H1 (cell line): ENCODE measurements at regions of chr1 and their contacts with region 1.

Region 1: DNA sequence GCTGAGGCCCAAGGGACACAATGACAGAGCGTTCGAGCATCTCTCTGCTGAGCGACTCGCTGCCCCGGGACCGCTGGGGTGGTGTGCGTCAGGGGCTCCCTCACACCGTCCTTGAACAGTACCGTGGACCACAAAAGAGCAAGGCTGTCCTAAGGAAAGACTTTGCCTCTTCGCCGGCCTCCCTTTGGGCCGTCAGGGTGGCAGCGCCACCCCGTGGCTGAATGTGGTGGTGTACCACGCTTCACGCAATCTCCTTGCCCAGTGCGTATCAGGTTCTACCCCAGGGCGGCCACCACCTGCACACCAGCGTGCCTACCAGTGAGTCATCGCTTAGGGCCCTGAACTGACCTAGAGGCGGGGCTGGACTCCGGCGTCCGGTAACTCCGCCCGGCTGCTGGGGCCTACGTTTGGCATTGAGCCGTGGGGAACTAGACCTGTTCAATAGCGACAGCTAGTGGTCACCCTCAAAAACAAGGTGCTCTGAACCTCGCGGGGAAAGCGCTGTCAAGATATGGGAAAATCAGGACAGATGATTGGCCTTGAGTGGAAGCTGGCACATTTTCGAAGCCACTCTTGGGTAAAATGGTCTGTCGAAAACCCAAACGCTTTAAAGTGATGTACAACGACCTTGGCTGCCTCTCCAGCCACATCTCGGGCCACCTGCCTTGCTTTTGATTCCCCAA is 8.1 kb upstream of the TRAF3IP3 start:
- DNase-seq: peak; percentile 99
- H3K4me3 ChIP-seq: peak overlapping the region in 1 of 4 experiments; percentile 51; a peak in 4 of 8 replicates
- H3K27ac ChIP-seq: no peak overlapping the region
- H3K4me1 ChIP-seq: peaks cover 0 to 11% (median 0%) of the 10 kb centered on the region in 4 experiments; a peak in 1 of 7 replicates
- H3K27me3 ChIP-seq: peaks cover 0 to 4% (median 0%) of the 10 kb centered on the region in 4 experiments; a peak in 1 of 7 replicates
- CTCF ChIP-seq: peak; percentile 70 to 97 (median 94)
- EP300 ChIP-seq: peak in 1 of 2 experiments; percentile 76; a peak in 1 of 3 replicates
- POLR2A ChIP-seq: no peak
- RAD21 ChIP-seq: peak; percentile 70 to 75

Region 2: GRCh38 chr1:209733409-209734192 is 14.1 kb before region 1 on chr1:
- CTCF ChIA-PET with region 1: interaction called, 12 read pairs
- POLR2A ChIA-PET with region 1: no interaction called
- DNase-seq: no peak
- H3K4me3 ChIP-seq: no peak overlapping the region
- H3K27ac ChIP-seq: no peak overlapping the region
- H3K4me1 ChIP-seq: no peaks in the 10 kb centered on the region
- H3K27me3 ChIP-seq: no peaks in the 10 kb centered on the region
- CTCF ChIP-seq: no peak
- EP300 ChIP-seq: no peak
- POLR2A ChIP-seq: no peak
- RAD21 ChIP-seq: no peak

Region 3: DNA sequence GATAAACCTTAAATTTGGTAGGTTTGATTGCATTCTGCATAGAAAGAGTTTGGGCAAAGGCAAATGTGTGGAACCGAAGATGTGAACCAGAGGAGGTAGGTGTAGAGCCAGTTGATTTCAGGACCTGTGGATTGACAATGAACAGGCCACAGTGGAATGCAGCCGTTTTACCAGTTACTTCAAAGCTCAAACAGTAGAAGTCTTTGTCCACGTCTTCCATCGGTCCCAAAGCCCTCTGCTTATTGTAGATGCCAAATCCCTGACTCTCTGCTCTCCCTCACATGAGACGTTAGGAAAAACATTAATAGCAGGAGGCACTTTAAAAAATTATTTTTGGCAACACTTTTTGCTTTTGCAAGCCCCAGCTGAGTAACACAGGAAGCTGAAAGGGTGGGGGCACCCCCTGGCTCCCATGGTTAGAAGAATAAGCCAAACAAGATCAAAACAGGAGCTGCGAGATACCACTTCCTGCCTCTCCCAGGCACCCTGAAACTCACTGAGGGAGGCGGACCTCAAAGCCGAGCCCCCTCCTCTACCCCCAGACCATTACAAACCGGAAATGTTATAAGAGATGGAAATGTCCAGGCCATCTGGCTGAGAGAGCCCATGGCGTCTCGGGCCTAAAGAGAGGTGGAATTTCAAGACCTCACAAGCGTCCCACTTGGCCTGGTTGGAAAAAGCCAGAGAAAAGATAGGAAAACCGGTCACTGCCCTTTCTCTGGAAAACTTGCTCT is 21.6 kb after region 1 on chr1:
- CTCF ChIA-PET with region 1: interaction called, 14 read pairs
- POLR2A ChIA-PET with region 1: no interaction called
- DNase-seq: no peak
- H3K4me3 ChIP-seq: no peak overlapping the region
- H3K27ac ChIP-seq: no peak overlapping the region
- H3K4me1 ChIP-seq: no peaks in the 10 kb centered on the region; a peak in 1 of 7 replicates
- H3K27me3 ChIP-seq: peaks cover 0 to 2% (median 0%) of the 10 kb centered on the region in 4 experiments; a peak in 1 of 7 replicates
- CTCF ChIP-seq: no peak
- EP300 ChIP-seq: no peak
- POLR2A ChIP-seq: no peak
- RAD21 ChIP-seq: no peak

Region 4: DNA sequence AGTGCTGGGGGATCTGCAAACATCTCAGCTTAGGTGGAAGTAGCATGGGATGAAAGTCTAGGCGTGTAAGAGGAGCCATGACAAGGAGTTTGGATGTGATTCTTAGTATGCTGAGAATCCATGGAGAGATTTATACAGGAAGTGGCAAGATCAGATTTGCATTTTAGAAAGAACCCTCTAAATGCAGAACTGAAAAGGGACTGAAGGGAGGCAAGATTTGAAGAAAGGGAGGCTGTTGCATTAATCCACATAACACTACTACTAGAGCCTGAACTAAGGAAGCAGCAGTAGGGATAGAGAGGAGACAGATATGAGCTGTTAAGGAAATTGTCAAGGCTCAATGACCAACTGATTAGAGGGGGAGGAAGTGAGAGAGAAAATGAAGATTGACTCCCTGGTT is 26.9 kb after region 1 on chr1:
- CTCF ChIA-PET with region 1: interaction called, 13 read pairs
- POLR2A ChIA-PET with region 1: no interaction called
- DNase-seq: no peak
- H3K4me3 ChIP-seq: no peak overlapping the region
- H3K27ac ChIP-seq: no peak overlapping the region
- H3K4me1 ChIP-seq: no peaks in the 10 kb centered on the region
- H3K27me3 ChIP-seq: peaks cover 0 to 2% (median 0%) of the 10 kb centered on the region in 4 experiments; a peak in 1 of 7 replicates
- CTCF ChIP-seq: no peak
- EP300 ChIP-seq: no peak
- POLR2A ChIP-seq: no peak
- RAD21 ChIP-seq: no peak